ENCODE measurements at regions of chr6 and their contacts with region 1.

Region 1: DNA sequence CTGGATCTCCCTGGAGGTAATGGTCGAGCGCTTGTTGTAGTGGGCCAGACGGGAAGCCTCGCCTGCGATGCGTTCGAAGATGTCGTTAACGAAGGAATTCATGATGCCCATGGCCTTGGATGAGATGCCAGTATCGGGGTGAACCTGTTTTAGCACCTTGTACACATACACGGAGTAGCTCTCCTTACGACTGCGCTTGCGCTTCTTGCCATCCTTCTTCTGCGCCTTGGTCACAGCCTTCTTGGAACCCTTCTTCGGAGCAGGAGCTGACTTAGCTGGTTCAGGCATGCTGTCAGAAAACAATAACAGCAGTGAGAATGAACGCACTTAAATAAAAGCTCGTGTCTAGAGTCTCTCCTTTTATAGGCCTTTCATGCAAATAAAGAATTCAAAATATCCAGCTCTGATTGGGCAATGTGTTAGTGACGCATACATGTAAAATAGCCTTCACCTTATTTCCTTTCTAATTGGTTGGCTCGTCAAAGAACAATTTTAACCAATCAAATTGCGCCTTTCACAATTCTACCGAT is 129.2 kb downstream of the HFE start:
- DNase-seq: peak; percentile 61 to 96 (median 73)
- ATAC-seq: peak; percentile 79
- H3K4me3 ChIP-seq: peak overlapping the region; percentile 71 to 74
- H3K4me3 Mint-ChIP-seq: no peak overlapping the region
- H3K27ac ChIP-seq: peak overlapping the region; percentile 82 to 91
- H3K27ac Mint-ChIP-seq: no peak overlapping the region
- H3K4me1 ChIP-seq: peaks cover 19% of the 10 kb centered on the region
- H3K4me1 Mint-ChIP-seq: peaks cover 14% of the 10 kb centered on the region
- H3K27me3 ChIP-seq: no peaks in the 10 kb centered on the region
- H3K27me3 Mint-ChIP-seq: no peaks in the 10 kb centered on the region
- CTCF ChIP-seq: no peak

Region 2: DNA sequence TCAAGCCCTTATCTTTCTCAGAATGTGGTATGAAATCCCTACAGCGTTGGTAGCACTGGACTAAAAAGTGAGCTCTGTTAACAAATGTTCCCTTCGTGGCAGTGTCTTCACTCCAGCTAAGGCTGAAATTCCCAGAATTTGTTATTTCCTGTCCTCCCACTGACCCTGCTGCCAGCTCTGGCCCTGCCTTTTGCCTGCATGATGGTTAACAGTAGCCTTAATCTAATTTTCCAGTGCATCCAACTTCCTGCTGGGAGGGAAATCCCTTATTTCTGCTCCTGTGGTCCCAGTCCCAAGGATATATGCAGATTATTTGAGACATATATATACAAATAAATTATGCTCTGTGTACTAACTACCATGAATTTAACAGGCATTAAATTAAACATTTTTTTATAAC is 1094.4 kb before region 1 on chr6:
- CTCF ChIA-PET with region 1: no interaction called
- POLR2A ChIA-PET with region 1: no interaction called
- intact Hi-C with region 1: no loop called
- DNase-seq: no peak
- ATAC-seq: no peak
- H3K4me3 ChIP-seq: no peak overlapping the region
- H3K4me3 Mint-ChIP-seq: no peak overlapping the region
- H3K27ac ChIP-seq: no peak overlapping the region
- H3K27ac Mint-ChIP-seq: no peak overlapping the region
- H3K4me1 ChIP-seq: peaks cover 5% of the 10 kb centered on the region
- H3K4me1 Mint-ChIP-seq: peaks cover 23% of the 10 kb centered on the region
- H3K27me3 ChIP-seq: no peaks in the 10 kb centered on the region
- H3K27me3 Mint-ChIP-seq: no peaks in the 10 kb centered on the region
- CTCF ChIP-seq: no peak

Region 3: DNA sequence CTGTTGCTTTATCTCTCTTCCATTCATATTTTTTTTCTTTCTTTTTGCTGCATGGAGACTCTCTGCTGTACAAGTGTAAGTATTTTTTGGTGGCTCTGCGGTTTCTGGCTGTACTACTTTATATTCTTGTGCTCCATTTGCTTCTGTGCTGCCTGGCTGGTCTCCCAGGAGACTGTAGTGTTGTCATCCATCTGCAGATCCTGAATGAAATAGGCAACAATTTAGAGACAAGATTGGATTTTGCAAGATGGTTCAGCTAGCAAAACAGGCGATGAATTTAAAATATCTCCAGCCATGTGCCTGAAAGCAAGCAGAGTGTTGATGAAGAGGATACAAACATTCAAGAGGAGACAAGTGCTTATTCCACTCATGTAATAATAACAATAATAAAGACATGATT is 639.5 kb before region 1 on chr6:
- CTCF ChIA-PET with region 1: no interaction called
- POLR2A ChIA-PET with region 1: no interaction called
- intact Hi-C with region 1: no loop called
- DNase-seq: no peak
- ATAC-seq: no peak
- H3K4me3 ChIP-seq: no peak overlapping the region
- H3K4me3 Mint-ChIP-seq: no peak overlapping the region
- H3K27ac ChIP-seq: no peak overlapping the region
- H3K27ac Mint-ChIP-seq: no peak overlapping the region
- H3K4me1 ChIP-seq: no peaks in the 10 kb centered on the region
- H3K4me1 Mint-ChIP-seq: peaks cover 8% of the 10 kb centered on the region
- H3K27me3 ChIP-seq: peaks cover 0 to 2% of the 10 kb centered on the region in 2 experiments
- H3K27me3 Mint-ChIP-seq: no peaks in the 10 kb centered on the region
- CTCF ChIP-seq: no peak

Region 4: GRCh38 chr6:26031595-26032339 is 184.7 kb before region 1 on chr6:
- CTCF ChIA-PET with region 1: no interaction called
- POLR2A ChIA-PET with region 1: interaction called, 22 read pairs
- intact Hi-C with region 1: no loop called
- DNase-seq: peak; percentile 79 to 93 (median 88)
- ATAC-seq: peak; percentile 63
- H3K4me3 ChIP-seq: peak overlapping the region; percentile 68 to 71
- H3K4me3 Mint-ChIP-seq: peak overlapping the region; percentile 93
- H3K27ac ChIP-seq: peak overlapping the region; percentile 76 to 79
- H3K27ac Mint-ChIP-seq: peak overlapping the region; percentile 96
- H3K4me1 ChIP-seq: peaks cover 31% of the 10 kb centered on the region
- H3K4me1 Mint-ChIP-seq: peaks cover 46% of the 10 kb centered on the region
- H3K27me3 ChIP-seq: no peaks in the 10 kb centered on the region
- H3K27me3 Mint-ChIP-seq: no peaks in the 10 kb centered on the region
- CTCF ChIP-seq: no peak

Region 5: DNA sequence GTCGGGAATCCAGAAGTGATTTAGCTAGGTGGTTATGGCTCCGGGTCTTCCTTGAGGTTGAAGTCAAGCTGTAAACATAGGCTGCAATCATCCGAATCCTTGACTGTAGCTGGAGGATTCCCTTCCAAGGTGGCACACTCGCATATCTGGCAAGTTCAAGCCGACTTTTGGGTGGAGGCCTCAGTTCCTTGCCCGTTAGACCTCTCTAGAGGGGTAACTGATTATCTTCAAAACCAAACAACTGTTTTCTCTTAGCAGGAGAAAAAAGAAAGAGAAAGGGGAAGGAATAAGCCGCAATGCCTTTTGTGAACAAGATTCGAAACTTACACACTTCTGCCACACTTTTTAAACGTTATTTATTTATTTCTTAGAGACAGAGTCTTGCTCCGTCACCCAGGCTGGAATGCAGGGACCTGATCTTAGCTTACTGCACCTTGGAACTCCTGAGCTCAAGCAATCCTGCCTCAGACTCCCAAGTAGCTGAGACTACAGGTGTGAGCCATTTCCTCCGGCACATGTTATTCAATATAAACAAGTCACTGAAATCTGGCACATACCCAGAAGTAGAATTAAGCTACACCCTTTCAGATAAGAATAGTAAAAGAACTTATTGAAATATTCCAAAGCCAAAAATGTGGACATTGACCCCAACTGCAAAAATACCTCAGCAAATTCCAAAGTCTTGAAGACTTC is 52.8 kb before region 1 on chr6:
- CTCF ChIA-PET with region 1: interaction called, 7 read pairs
- POLR2A ChIA-PET with region 1: interaction called, 305 read pairs
- intact Hi-C with region 1: loop called (anchors 1 to 2 kb)
- DNase-seq: no peak
- ATAC-seq: no peak
- H3K4me3 ChIP-seq: no peak overlapping the region
- H3K4me3 Mint-ChIP-seq: peak overlapping the region; percentile 42
- H3K27ac ChIP-seq: no peak overlapping the region
- H3K27ac Mint-ChIP-seq: peak overlapping the region; percentile 70
- H3K4me1 ChIP-seq: peaks cover 40% of the 10 kb centered on the region
- H3K4me1 Mint-ChIP-seq: peaks cover 48% of the 10 kb centered on the region
- H3K27me3 ChIP-seq: no peaks in the 10 kb centered on the region
- H3K27me3 Mint-ChIP-seq: no peaks in the 10 kb centered on the region
- CTCF ChIP-seq: no peak

Region 6: GRCh38 chr6:26234421-26235296 is 18.2 kb after region 1 on chr6:
- CTCF ChIA-PET with region 1: interaction called, 22 read pairs
- POLR2A ChIA-PET with region 1: interaction called, 450 read pairs
- intact Hi-C with region 1: loop called (anchors 1 to 2 kb)
- DNase-seq: peak; percentile 55 to 88 (median 66)
- ATAC-seq: peak; percentile 63
- H3K4me3 ChIP-seq: peak overlapping the region; percentile 66 to 76
- H3K4me3 Mint-ChIP-seq: peak overlapping the region; percentile 85
- H3K27ac ChIP-seq: peak overlapping the region; percentile 84 to 92
- H3K27ac Mint-ChIP-seq: peak overlapping the region; percentile 93
- H3K4me1 ChIP-seq: peaks cover 14% of the 10 kb centered on the region
- H3K4me1 Mint-ChIP-seq: peaks cover 31% of the 10 kb centered on the region
- H3K27me3 ChIP-seq: no peaks in the 10 kb centered on the region
- H3K27me3 Mint-ChIP-seq: no peaks in the 10 kb centered on the region
- CTCF ChIP-seq: no peak

Region 7: GRCh38 chr6:26278536-26278935 is 62.1 kb after region 1 on chr6:
- CTCF ChIA-PET with region 1: interaction called, 3 read pairs
- POLR2A ChIA-PET with region 1: interaction called, 229 read pairs
- intact Hi-C with region 1: loop called in 1 of 2 experiments (anchors 2 kb)
- DNase-seq: no peak
- ATAC-seq: no peak
- H3K4me3 ChIP-seq: no peak overlapping the region
- H3K4me3 Mint-ChIP-seq: no peak overlapping the region
- H3K27ac ChIP-seq: no peak overlapping the region
- H3K27ac Mint-ChIP-seq: no peak overlapping the region
- H3K4me1 ChIP-seq: peaks cover 16% of the 10 kb centered on the region
- H3K4me1 Mint-ChIP-seq: peaks cover 14% of the 10 kb centered on the region
- H3K27me3 ChIP-seq: no peaks in the 10 kb centered on the region
- H3K27me3 Mint-ChIP-seq: no peaks in the 10 kb centered on the region
- CTCF ChIP-seq: no peak

Region 8: GRCh38 chr6:27132532-27133280 is 916.3 kb after region 1 on chr6:
- CTCF ChIA-PET with region 1: no interaction called
- POLR2A ChIA-PET with region 1: interaction called, 18 read pairs
- intact Hi-C with region 1: no loop called
- DNase-seq: peak; percentile 80 to 99 (median 87)
- ATAC-seq: peak; percentile 82
- H3K4me3 ChIP-seq: peak overlapping the region; percentile 76 to 83
- H3K4me3 Mint-ChIP-seq: no peak overlapping the region
- H3K27ac ChIP-seq: peak overlapping the region; percentile 86 to 92
- H3K27ac Mint-ChIP-seq: no peak overlapping the region
- H3K4me1 ChIP-seq: peaks cover 15% of the 10 kb centered on the region
- H3K4me1 Mint-ChIP-seq: peaks cover 21% of the 10 kb centered on the region
- H3K27me3 ChIP-seq: no peaks in the 10 kb centered on the region
- H3K27me3 Mint-ChIP-seq: no peaks in the 10 kb centered on the region
- CTCF ChIP-seq: no peak

Region 9: GRCh38 chr6:27871924-27872638 is 1655.7 kb after region 1 on chr6:
- CTCF ChIA-PET with region 1: no interaction called
- POLR2A ChIA-PET with region 1: interaction called, 22 read pairs
- intact Hi-C with region 1: no loop called
- DNase-seq: peak; percentile 72 to 97 (median 85)
- ATAC-seq: peak; percentile 75
- H3K4me3 ChIP-seq: peak overlapping the region; percentile 54 to 67
- H3K4me3 Mint-ChIP-seq: peak overlapping the region; percentile 82
- H3K27ac ChIP-seq: peak overlapping the region; percentile 81 to 86
- H3K27ac Mint-ChIP-seq: peak overlapping the region; percentile 98
- H3K4me1 ChIP-seq: peaks cover 20% of the 10 kb centered on the region
- H3K4me1 Mint-ChIP-seq: peaks cover 36% of the 10 kb centered on the region
- H3K27me3 ChIP-seq: peaks cover 0 to 3% of the 10 kb centered on the region in 2 experiments
- H3K27me3 Mint-ChIP-seq: no peaks in the 10 kb centered on the region
- CTCF ChIP-seq: peak; percentile 48

Measured in CD8-positive, alpha-beta T cell (primary cell).